Activated CD4-positive, alpha-beta T cell treated with anti-CD3 and anti-CD28 coated beads, Interleukin-2, amount 10 ng/mL, durations not matched to agents 24 days and 14 days (primary cell): ENCODE measurements at regions of chr1 and their contacts with region 1.

Region 1: DNA sequence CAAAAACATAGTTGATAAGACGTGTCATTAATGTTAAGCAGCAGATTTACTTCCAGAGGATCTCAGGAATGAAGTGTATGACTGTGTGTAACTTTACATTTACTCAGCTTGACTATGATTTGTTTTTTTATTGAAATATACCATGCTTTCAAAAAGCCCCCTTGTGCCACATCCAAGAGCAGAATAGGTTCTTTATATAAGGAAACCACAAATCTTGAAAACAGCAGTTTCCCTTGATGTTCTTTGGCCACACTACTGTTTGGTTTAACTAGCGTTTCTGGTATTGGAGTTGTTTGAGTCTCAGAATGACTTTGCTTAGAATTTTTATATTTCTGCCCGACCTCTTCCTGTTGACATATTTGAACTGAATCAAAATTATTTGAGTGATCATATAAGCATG is 25.0 kb downstream of the LRRC8C start:
- DNase-seq: peak; percentile 83
- H3K4me3 Mint-ChIP-seq: peak overlapping the region; percentile 40
- H3K27ac Mint-ChIP-seq: peak overlapping the region; percentile 79
- H3K4me1 Mint-ChIP-seq: peaks cover 70% of the 10 kb centered on the region
- H3K27me3 Mint-ChIP-seq: no peaks in the 10 kb centered on the region

Region 2: DNA sequence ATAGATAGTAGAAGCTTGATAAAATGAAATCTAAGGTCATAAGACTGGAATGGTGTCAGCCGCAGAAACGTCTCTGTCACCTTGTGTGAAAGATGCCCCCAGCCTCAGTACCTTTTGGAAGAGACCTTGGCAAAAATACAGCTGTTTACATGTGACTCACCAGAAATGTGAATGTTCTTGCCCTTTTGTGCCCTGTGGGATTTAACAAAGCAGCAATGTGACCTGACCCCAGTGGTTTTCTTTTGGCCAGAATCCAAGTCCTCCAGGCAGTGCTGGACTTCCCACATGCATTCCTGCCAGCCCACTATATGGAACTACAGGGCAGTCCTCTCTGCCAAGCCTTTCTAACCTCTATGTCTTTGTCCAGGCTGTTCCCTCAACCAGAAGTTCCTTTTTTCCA is 52.2 kb before region 1 on chr1:
- intact Hi-C with region 1: loop called (anchors 2 kb)
- DNase-seq: no peak
- H3K4me3 Mint-ChIP-seq: peak overlapping the region; percentile 64
- H3K27ac Mint-ChIP-seq: peak overlapping the region; percentile 99
- H3K4me1 Mint-ChIP-seq: peaks cover 86% of the 10 kb centered on the region
- H3K27me3 Mint-ChIP-seq: no peaks in the 10 kb centered on the region

Region 3: GRCh38 chr1:89611721-89612120 is 46.2 kb before region 1 on chr1:
- intact Hi-C with region 1: loop called (anchors 1 kb)
- DNase-seq: peak; percentile 82
- H3K4me3 Mint-ChIP-seq: peak overlapping the region; percentile 88
- H3K27ac Mint-ChIP-seq: peak overlapping the region; percentile 99
- H3K4me1 Mint-ChIP-seq: peaks cover 68% of the 10 kb centered on the region
- H3K27me3 Mint-ChIP-seq: no peaks in the 10 kb centered on the region

Region 4: GRCh38 chr1:89670163-89670562 is 12.3 kb after region 1 on chr1:
- intact Hi-C with region 1: loop called (anchors 2 kb)
- DNase-seq: peak; percentile 70
- H3K4me3 Mint-ChIP-seq: peak overlapping the region; percentile 30
- H3K27ac Mint-ChIP-seq: peak overlapping the region; percentile 74
- H3K4me1 Mint-ChIP-seq: peaks cover 73% of the 10 kb centered on the region
- H3K27me3 Mint-ChIP-seq: no peaks in the 10 kb centered on the region

Region 5: GRCh38 chr1:89692601-89693521 is 35.0 kb after region 1 on chr1:
- intact Hi-C with region 1: loop called (anchors 5 kb)
- DNase-seq: no peak
- H3K4me3 Mint-ChIP-seq: peak overlapping the region; percentile 51
- H3K27ac Mint-ChIP-seq: peak overlapping the region; percentile 85
- H3K4me1 Mint-ChIP-seq: peaks cover 64% of the 10 kb centered on the region
- H3K27me3 Mint-ChIP-seq: no peaks in the 10 kb centered on the region

Region 6: DNA sequence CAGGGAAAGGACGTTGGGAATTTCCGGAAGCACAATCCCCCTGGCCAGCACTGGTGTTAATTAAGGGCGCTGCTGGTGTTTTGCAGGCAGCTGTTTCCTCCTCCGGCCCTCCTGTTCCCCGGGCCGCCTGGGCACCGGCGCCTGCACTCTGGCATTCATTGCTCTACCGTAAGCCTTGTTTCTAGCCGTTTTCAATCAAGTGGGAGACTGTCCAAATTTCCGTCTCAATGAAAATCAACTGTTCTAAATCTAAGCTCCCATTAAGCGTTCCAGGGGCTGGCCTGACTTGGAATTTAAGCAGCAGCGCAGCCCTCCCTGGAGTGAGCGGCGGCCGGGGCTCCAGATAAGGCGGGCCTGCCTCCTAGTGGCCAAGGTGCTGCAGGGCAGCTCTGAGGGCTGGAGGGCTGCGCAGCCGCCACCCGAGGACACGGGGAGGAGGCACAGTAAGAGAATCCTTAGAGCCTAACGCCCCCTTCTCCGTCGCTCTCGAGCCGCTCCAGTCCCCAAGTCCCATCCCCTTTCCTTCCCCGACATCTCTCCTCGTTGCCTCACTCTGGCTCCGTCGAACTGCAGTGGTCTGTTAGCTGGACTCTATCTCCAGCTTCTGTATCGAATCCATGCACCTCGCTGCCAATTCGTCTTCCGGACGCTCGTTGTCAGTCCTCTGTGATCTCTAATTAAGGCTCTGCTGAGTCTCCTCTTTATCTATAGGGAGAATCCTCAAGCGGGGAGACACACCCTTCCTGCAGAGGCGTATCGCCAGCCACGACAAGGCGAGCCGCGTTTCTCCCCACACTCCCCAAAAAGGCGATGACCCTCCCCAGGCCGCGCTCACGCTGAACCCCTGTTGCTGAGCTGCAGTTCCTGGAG is 105.1 kb after region 1 on chr1:
- intact Hi-C with region 1: loop called (anchors 1 kb)
- DNase-seq: peak; percentile 96
- H3K4me3 Mint-ChIP-seq: peak overlapping the region; percentile 91
- H3K27ac Mint-ChIP-seq: peak overlapping the region; percentile 96
- H3K4me1 Mint-ChIP-seq: peaks cover 53% of the 10 kb centered on the region
- H3K27me3 Mint-ChIP-seq: no peaks in the 10 kb centered on the region

Region 7: DNA sequence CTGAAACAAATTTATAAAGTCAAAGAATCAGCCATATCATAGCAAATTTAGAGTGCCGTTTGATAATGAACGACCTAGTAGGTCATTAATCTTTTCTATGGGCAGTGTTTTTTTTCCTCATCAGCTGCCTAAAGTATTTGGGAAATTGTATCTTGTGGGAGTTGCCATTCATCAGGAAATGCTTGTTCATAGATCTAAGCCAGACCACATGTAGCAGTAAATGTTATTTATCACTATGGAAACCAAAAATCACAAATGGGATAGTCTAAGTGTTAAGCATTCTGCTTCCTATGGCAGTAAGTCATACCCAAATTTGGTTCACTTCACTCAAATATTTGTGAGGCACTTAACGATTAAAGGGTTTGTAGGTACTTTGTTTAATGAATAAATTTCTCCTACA is 215.9 kb after region 1 on chr1:
- intact Hi-C with region 1: no loop called
- DNase-seq: no peak
- H3K4me3 Mint-ChIP-seq: no peak overlapping the region
- H3K27ac Mint-ChIP-seq: no peak overlapping the region
- H3K4me1 Mint-ChIP-seq: peaks cover 35% of the 10 kb centered on the region
- H3K27me3 Mint-ChIP-seq: no peaks in the 10 kb centered on the region

Region 8: GRCh38 chr1:91099746-91100621 is 1442.1 kb after region 1 on chr1:
- intact Hi-C with region 1: no loop called
- DNase-seq: no peak
- H3K4me3 Mint-ChIP-seq: no peak overlapping the region
- H3K27ac Mint-ChIP-seq: no peak overlapping the region
- H3K4me1 Mint-ChIP-seq: no peaks in the 10 kb centered on the region
- H3K27me3 Mint-ChIP-seq: no peaks in the 10 kb centered on the region